RWPE1 (cell line): ENCODE measurements at regions of chr1 and their contacts with region 1.

Region 1: DNA sequence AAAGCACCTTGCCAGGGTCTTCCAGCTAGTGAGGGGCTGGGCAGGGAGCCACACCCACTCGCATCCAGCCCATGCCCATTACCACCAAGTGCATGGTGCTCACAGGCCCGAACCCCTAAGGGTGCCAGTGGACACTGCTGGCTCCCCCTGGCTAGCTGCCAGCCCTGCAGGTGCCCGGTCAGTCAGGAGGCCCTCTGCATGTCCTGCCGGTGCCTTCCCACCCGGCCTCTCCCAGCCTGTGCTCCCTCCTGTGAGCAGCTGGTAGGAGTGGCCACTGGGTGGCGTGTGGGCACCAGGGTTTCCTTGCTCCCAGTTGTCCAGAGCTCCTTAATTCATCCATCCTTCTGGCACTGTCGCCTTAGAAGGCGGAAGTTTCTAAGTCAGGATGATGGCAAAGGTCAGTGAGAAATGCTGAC is 33.4 kb downstream of the QSOX1 start:
- DNase-seq: peak; percentile 57
- H3K27ac ChIP-seq: no peak overlapping the region
- CTCF ChIP-seq: peak; percentile 80

Region 2: GRCh38 chr1:180198196-180198595 is 10.1 kb after region 1 on chr1:
- CTCF ChIA-PET with region 1: interaction called, 11 read pairs
- POLR2A ChIA-PET with region 1: no interaction called
- DNase-seq: peak; percentile 34
- H3K27ac ChIP-seq: no peak overlapping the region
- CTCF ChIP-seq: no peak

Region 3: DNA sequence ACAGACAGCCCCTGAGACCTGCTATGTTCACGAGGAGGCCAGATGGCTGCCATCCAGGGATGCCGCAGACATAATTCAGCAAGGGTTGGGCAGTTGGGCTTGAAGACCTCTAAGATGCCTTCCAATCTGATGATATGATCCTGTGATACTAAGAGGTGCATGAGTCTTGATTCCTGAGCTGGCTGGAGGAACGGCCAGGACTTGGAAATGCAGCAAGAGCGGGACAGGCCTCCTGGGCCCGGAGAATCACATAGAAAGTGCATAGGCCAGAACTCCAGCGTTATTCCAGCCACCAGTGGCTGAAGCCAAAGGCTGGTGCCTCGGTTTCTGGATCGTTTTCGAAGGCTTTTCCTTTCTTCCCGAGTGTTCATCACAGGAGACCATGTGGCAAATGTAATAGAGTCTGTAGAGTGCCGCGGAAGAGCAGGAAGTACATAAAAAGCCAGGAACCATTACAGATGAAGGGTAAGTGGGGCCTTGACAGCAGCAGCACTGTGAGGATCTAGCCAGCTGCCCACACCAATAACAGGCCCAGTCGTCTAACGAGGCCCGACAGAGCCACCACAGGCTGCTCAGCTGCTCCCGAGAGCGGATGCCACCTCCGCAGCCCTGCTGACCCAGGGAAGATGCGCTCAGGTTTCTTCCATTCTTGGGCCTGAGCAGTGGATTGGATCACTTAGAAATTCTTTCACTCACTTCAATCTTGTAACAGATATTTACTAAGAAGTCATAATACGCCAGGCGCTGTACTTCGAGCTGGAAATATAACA is 27.9 kb after region 1 on chr1:
- CTCF ChIA-PET with region 1: interaction called, 10 read pairs
- POLR2A ChIA-PET with region 1: no interaction called
- DNase-seq: no peak
- H3K27ac ChIP-seq: no peak overlapping the region
- CTCF ChIP-seq: no peak